ENCODE measurements at regions of chr20 and their contacts with region 1.

Region 1: GRCh38 chr20:35463455-35464300 is 8.3 kb downstream of the CEP250 start:
- DNase-seq: peak; percentile 59 to 67 (median 64)
- H3K4me3 ChIP-seq: no peak overlapping the region
- H3K4me3 Mint-ChIP-seq: peak overlapping the region in 1 of 8 donors; percentile 15
- H3K27ac ChIP-seq: no peak overlapping the region
- H3K27ac Mint-ChIP-seq: peak overlapping the region in 2 of 7 donors; percentile 21 to 71
- H3K4me1 ChIP-seq: peaks cover 8% of the 10 kb centered on the region
- H3K4me1 Mint-ChIP-seq: peaks cover 4 to 8% (median 7%) of the 10 kb centered on the region in 4 donors
- H3K27me3 ChIP-seq: no peaks in the 10 kb centered on the region
- H3K27me3 Mint-ChIP-seq: no peaks in the 10 kb centered on the region

Region 2: DNA sequence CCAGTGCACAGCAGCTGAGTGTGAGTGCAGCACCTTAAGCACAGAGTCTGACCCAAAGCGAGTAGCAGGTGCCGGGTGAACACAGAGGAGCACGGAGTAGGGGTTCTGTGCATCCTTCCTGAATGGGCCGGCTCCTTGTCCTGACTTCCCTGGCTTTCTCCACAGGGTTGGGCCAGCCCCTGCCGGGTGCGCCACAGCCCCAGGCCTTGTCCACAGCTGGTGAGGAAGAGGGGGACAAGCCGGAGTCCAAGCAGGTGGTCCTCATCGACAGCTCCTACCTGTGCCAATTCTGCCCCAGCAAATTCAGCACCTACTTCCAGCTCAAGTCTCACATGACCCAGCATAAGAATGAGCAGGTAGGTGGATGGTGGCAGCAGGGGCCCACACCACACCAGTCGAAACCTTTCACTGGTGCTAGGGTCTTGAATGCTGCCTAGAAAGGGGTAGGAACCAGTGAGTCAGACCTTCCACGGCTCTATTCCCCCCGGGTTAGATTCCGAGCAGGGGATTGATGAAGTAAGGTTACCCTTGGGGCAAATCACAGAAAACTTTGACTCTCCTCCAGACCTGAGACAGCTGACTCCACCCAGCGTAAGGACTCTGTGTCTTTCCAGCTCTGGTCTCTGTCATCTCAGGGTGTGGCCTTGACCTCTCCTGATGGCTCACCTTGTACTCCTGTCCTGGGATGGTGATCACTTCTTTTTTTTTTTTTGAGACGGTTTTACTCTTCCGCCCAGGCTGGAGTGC is 1696.8 kb before region 1 on chr20:
- CTCF ChIA-PET with region 1: no interaction called
- POLR2A ChIA-PET with region 1: no interaction called
- intact Hi-C with region 1: no loop called
- DNase-seq: no peak
- H3K4me3 ChIP-seq: no peak overlapping the region
- H3K4me3 Mint-ChIP-seq: no peak overlapping the region
- H3K27ac ChIP-seq: no peak overlapping the region
- H3K27ac Mint-ChIP-seq: no peak overlapping the region
- H3K4me1 ChIP-seq: no peaks in the 10 kb centered on the region
- H3K4me1 Mint-ChIP-seq: peaks cover 0 to under 1% (median 0%) of the 10 kb centered on the region in 4 donors
- H3K27me3 ChIP-seq: no peaks in the 10 kb centered on the region
- H3K27me3 Mint-ChIP-seq: no peaks in the 10 kb centered on the region

Region 3: DNA sequence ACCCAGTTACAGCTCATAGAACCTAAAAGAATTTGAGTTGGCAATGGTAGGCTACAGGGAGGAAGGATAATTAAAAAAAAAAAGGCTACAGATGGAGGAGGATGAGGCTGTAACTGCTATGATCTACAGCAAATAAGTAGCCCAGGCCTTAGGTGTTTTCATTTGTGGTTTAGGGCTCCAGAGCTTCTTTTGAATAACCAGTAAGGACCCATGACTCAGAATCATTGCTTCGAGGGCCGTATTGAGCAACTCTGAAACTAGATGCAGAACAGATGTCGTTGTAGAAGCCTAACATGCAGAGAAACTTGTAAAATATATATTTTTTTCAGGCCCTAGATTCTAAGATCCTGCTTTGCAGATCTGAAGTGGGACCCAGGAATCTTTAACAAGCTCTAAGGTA is 1241.5 kb before region 1 on chr20:
- CTCF ChIA-PET with region 1: no interaction called
- POLR2A ChIA-PET with region 1: no interaction called
- intact Hi-C with region 1: no loop called
- DNase-seq: no peak
- H3K4me3 ChIP-seq: no peak overlapping the region
- H3K4me3 Mint-ChIP-seq: no peak overlapping the region
- H3K27ac ChIP-seq: no peak overlapping the region
- H3K27ac Mint-ChIP-seq: no peak overlapping the region
- H3K4me1 ChIP-seq: no peaks in the 10 kb centered on the region
- H3K4me1 Mint-ChIP-seq: no peaks in the 10 kb centered on the region
- H3K27me3 ChIP-seq: no peaks in the 10 kb centered on the region
- H3K27me3 Mint-ChIP-seq: peaks cover 18 to 22% of the 10 kb centered on the region in 2 donors

Region 4: GRCh38 chr20:35421322-35421721 is 42.4 kb before region 1 on chr20:
- CTCF ChIA-PET with region 1: no interaction called
- POLR2A ChIA-PET with region 1: no interaction called
- intact Hi-C with region 1: no loop called
- DNase-seq: no peak
- H3K4me3 ChIP-seq: no peak overlapping the region
- H3K4me3 Mint-ChIP-seq: no peak overlapping the region
- H3K27ac ChIP-seq: no peak overlapping the region
- H3K27ac Mint-ChIP-seq: no peak overlapping the region
- H3K4me1 ChIP-seq: no peaks in the 10 kb centered on the region
- H3K4me1 Mint-ChIP-seq: no peaks in the 10 kb centered on the region
- H3K27me3 ChIP-seq: no peaks in the 10 kb centered on the region
- H3K27me3 Mint-ChIP-seq: peaks cover 9 to 12% of the 10 kb centered on the region in 2 donors

Region 5: GRCh38 chr20:35490736-35491181 is 27.1 kb after region 1 on chr20:
- CTCF ChIA-PET with region 1: interaction called, 16 read pairs
- POLR2A ChIA-PET with region 1: interaction called, 4 read pairs
- intact Hi-C with region 1: no loop called
- DNase-seq: peak; percentile 70 to 84 (median 74)
- H3K4me3 ChIP-seq: peak overlapping the region; percentile 48 to 97
- H3K4me3 Mint-ChIP-seq: peak overlapping the region; percentile 95 to 99 (median 99)
- H3K27ac ChIP-seq: peak overlapping the region; percentile 87
- H3K27ac Mint-ChIP-seq: peak overlapping the region; percentile 94 to 100 (median 98)
- H3K4me1 ChIP-seq: peaks cover 55% of the 10 kb centered on the region
- H3K4me1 Mint-ChIP-seq: peaks cover 38 to 81% (median 56%) of the 10 kb centered on the region in 4 donors
- H3K27me3 ChIP-seq: no peaks in the 10 kb centered on the region
- H3K27me3 Mint-ChIP-seq: no peaks in the 10 kb centered on the region

Region 6: GRCh38 chr20:35601008-35601973 is 137.6 kb after region 1 on chr20:
- CTCF ChIA-PET with region 1: interaction called, 15 read pairs
- POLR2A ChIA-PET with region 1: interaction called, 3 read pairs
- intact Hi-C with region 1: loop called (anchors 5 kb)
- DNase-seq: peak; percentile 78 to 83 (median 79)
- H3K4me3 ChIP-seq: peak overlapping the region; percentile 29 to 50
- H3K4me3 Mint-ChIP-seq: peak overlapping the region; percentile 77 to 85 (median 80)
- H3K27ac ChIP-seq: no peak overlapping the region
- H3K27ac Mint-ChIP-seq: peak overlapping the region in 6 of 7 donors; percentile 22 to 81 (median 52)
- H3K4me1 ChIP-seq: peaks cover 17% of the 10 kb centered on the region
- H3K4me1 Mint-ChIP-seq: peaks cover 2 to 15% (median 4%) of the 10 kb centered on the region in 4 donors
- H3K27me3 ChIP-seq: no peaks in the 10 kb centered on the region
- H3K27me3 Mint-ChIP-seq: peaks cover 2 to 6% of the 10 kb centered on the region in 2 donors

Region 7: DNA sequence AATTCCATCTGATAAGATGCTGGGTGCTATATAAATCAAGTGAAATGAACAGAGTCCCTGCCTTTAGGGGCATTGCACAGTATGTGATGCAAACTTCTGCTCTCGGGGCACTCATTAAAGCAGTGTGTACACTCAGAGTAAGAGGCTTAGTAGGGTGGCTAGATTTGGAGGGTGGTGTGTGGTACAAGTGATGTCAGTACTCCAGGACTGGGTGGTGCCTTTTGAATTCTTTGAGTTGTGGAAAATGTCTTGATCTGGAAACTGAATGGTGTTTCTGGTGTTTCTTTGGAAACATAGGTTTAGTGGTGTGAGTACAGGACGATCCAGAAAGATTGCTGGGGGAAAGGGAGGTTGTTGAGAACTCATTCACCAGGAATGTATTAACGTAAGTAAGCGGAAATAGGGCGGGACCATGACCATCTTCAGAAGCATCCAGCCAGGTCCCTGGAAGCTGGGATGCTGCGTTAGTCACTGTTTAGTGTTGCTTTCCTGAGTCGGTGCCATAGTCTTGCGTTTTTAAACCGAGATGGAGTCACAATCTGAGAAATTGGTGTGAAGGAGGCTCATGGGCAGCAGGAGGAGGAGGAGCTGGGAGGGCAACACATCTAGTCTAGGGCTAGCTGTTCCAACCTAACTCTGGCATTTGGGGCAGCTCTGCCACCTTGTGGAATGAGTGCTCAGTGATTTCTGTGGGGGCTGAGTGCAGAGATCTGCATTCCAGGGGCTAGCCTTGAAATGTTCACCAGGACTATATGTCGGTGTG is 420.3 kb after region 1 on chr20:
- CTCF ChIA-PET with region 1: interaction called, 47 read pairs
- POLR2A ChIA-PET with region 1: interaction called, 3 read pairs
- intact Hi-C with region 1: loop called (anchors 1 kb)
- DNase-seq: peak; percentile 52 to 59 (median 56)
- H3K4me3 ChIP-seq: no peak overlapping the region
- H3K4me3 Mint-ChIP-seq: no peak overlapping the region
- H3K27ac ChIP-seq: no peak overlapping the region
- H3K27ac Mint-ChIP-seq: peak overlapping the region in 5 of 7 donors; percentile 2 to 74 (median 42)
- H3K4me1 ChIP-seq: peaks cover 6% of the 10 kb centered on the region
- H3K4me1 Mint-ChIP-seq: peaks cover 7 to 16% (median 11%) of the 10 kb centered on the region in 4 donors
- H3K27me3 ChIP-seq: no peaks in the 10 kb centered on the region
- H3K27me3 Mint-ChIP-seq: no peaks in the 10 kb centered on the region

Measured in CD4-positive, alpha-beta memory T cell (primary cell).